Endothelial cell of umbilical vein (primary cell): ENCODE measurements at regions of chr17 and their contacts with region 1.

Region 1: DNA sequence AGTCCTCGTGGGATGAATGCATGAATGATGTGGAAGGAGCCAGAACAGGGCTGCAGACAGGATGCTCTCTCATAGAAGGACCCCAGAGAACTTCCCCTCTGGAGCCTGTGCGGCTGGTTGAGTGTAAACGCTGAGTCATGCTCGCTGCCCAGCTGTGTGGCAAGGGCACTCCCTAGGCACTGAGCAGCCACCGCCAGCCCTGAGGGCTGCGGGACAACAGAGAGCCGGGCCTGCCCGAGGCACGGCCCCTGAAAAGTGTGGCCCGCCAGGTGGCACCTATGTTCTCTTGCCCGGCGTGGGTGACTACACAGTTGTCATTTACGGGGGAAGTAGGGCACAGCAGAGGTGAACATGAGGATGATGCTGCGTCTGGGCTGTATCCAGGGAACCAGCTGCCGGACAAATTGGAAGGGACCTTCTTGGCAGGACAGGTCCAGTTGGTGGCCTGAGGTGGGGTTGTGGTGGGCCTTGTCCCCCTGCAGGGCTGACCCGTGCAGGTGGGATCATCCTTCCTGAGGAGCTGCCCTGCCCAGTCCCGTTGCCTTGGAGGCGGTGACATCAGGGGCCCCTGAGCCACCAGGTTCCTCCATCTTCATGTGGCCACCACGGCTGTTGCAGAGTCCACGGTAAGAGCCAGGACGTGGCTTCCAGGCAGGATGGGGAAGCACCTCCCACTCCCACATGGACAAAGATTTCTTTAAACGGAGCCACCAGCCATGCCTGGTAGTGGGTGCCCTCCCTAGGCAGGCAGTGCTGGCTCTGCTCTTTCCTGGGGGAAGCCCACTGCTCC is 94.8 kb upstream of the CBX4 start:
- DNase-seq: peak; percentile 68
- H3K4me3 ChIP-seq: no peak overlapping the region
- H3K27ac ChIP-seq: peak overlapping the region; percentile 4
- H3K4me1 ChIP-seq: peaks cover 12% of the 10 kb centered on the region
- H3K27me3 ChIP-seq: peaks cover 2 to 5% of the 10 kb centered on the region in 2 experiments
- CTCF ChIP-seq: no peak
- POLR2A ChIP-seq: no peak

Region 2: GRCh38 chr17:79917673-79918495 is 16.2 kb before region 1 on chr17:
- CTCF ChIA-PET with region 1: no interaction called
- POLR2A ChIA-PET with region 1: no interaction called
- dilution Hi-C with region 1: no loop called
- intact Hi-C with region 1: no loop called
- DNase-seq: no peak
- H3K4me3 ChIP-seq: no peak overlapping the region
- H3K27ac ChIP-seq: no peak overlapping the region
- H3K4me1 ChIP-seq: peaks cover 6% of the 10 kb centered on the region
- H3K27me3 ChIP-seq: no peaks in the 10 kb centered on the region
- CTCF ChIP-seq: no peak
- POLR2A ChIP-seq: no peak

Region 3: GRCh38 chr17:79991140-79991923 is 57.3 kb after region 1 on chr17:
- CTCF ChIA-PET with region 1: interaction called, 3 read pairs
- POLR2A ChIA-PET with region 1: no interaction called
- dilution Hi-C with region 1: no loop called
- intact Hi-C with region 1: loop called (anchors 5 kb)
- DNase-seq: peak; percentile 70
- H3K4me3 ChIP-seq: peak overlapping the region in 1 of 3 experiments; percentile 14
- H3K27ac ChIP-seq: no peak overlapping the region
- H3K4me1 ChIP-seq: peaks cover 20% of the 10 kb centered on the region
- H3K27me3 ChIP-seq: no peaks in the 10 kb centered on the region
- CTCF ChIP-seq: peak; percentile 24 to 79
- POLR2A ChIP-seq: no peak